ENCODE measurements at regions of chr6 and their contacts with region 1.

Region 1: DNA sequence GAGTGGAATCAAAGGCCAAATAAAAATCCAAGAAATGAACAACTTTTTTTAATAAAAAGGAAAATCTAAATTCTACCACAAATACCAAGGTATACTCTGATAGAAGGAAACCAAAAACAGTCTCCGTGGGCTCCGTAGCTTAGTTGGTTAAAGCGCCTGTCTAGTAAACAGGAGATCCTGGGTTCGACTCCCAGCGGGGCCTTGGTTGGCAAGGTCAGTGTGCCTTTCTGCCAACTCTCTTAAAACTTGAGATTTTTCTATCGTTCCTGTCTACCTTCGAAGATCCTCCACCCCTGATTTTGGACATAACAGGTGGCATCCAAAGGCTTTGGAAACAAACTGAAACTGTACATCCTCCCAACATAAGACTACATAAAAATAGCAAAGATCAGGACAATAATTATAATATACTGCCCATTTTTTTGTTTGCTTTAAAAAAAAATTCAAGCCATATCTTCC is 197.9 kb downstream of the TRIM27 start:
- DNase-seq: no peak
- H3K4me3 Mint-ChIP-seq: no peak overlapping the region
- H3K27ac Mint-ChIP-seq: no peak overlapping the region
- H3K4me1 Mint-ChIP-seq: peaks cover 3% of the 10 kb centered on the region
- H3K27me3 Mint-ChIP-seq: no peaks in the 10 kb centered on the region
- CTCF ChIP-seq: no peak

Region 2: GRCh38 chr6:27545271-27546046 is 1180.5 kb before region 1 on chr6:
- CTCF ChIA-PET with region 1: no interaction called
- POLR2A ChIA-PET with region 1: no interaction called
- intact Hi-C with region 1: no loop called
- DNase-seq: peak; percentile 87
- H3K4me3 Mint-ChIP-seq: peak overlapping the region; percentile 83
- H3K27ac Mint-ChIP-seq: peak overlapping the region; percentile 91
- H3K4me1 Mint-ChIP-seq: peaks cover 22% of the 10 kb centered on the region
- H3K27me3 Mint-ChIP-seq: no peaks in the 10 kb centered on the region
- CTCF ChIP-seq: no peak

Region 3: DNA sequence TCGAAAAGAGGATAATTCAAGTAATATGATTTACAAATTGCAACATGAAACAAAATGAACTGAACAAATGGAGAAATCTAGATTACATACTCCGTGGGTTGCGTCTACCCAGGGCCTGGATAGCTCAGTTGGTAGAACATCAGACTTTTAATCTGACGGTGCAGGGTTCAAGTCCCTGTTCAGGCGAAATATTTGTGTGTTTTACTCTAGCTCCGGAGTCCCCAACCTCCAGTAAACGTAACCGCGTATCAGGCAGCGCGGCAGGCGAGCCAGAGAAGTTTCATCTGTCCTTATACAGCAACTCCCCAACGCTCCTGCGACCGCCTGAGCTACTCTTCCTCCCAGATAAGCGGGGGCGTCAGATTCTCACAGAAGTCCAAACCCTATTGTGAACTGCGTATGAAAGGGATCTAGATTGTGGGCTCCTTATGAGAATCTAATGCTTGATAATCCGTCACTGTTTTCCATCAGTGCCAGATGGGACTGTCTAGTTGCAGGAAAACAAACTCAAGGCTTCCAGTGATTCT is 21.8 kb after region 1 on chr6:
- CTCF ChIA-PET with region 1: interaction called, 5 read pairs
- POLR2A ChIA-PET with region 1: interaction called, 13 read pairs
- intact Hi-C with region 1: no loop called
- DNase-seq: peak; percentile 86
- H3K4me3 Mint-ChIP-seq: peak overlapping the region; percentile 76
- H3K27ac Mint-ChIP-seq: peak overlapping the region; percentile 81
- H3K4me1 Mint-ChIP-seq: no peaks in the 10 kb centered on the region
- H3K27me3 Mint-ChIP-seq: no peaks in the 10 kb centered on the region
- CTCF ChIP-seq: no peak

Region 4: DNA sequence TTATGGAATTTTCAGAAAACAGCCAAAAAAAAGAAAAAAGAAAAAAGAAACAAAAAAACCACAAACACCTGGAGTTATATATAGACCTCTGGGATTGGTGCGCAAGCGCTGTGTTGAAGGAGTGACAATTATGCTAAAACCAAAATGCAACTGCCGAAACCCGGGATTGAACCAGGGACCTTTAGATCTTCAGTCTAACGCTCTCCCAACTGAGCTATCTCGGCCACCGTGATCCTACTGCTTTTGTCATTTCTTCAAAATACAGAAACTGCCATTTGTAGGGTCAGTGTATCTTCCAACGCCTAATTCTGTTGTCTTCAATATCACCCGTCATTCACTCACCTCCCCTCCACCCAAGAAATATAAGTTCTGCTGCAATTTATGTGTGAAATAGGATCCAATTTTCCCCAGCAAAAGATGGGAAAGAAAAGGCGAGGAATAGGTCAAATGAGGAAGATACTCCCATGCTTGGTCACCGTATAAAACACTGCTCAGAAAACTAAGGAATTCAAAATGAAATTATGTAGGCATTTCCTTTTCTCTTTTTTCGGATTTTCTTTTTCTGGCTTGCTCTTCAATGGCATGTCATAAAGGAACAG is 81.9 kb after region 1 on chr6:
- CTCF ChIA-PET with region 1: interaction called, 3 read pairs
- POLR2A ChIA-PET with region 1: interaction called, 5 read pairs
- intact Hi-C with region 1: loop called (anchors 5 kb)
- DNase-seq: peak; percentile 76
- H3K4me3 Mint-ChIP-seq: peak overlapping the region; percentile 41
- H3K27ac Mint-ChIP-seq: no peak overlapping the region
- H3K4me1 Mint-ChIP-seq: peaks cover 23% of the 10 kb centered on the region
- H3K27me3 Mint-ChIP-seq: no peaks in the 10 kb centered on the region
- CTCF ChIP-seq: no peak

Region 5: DNA sequence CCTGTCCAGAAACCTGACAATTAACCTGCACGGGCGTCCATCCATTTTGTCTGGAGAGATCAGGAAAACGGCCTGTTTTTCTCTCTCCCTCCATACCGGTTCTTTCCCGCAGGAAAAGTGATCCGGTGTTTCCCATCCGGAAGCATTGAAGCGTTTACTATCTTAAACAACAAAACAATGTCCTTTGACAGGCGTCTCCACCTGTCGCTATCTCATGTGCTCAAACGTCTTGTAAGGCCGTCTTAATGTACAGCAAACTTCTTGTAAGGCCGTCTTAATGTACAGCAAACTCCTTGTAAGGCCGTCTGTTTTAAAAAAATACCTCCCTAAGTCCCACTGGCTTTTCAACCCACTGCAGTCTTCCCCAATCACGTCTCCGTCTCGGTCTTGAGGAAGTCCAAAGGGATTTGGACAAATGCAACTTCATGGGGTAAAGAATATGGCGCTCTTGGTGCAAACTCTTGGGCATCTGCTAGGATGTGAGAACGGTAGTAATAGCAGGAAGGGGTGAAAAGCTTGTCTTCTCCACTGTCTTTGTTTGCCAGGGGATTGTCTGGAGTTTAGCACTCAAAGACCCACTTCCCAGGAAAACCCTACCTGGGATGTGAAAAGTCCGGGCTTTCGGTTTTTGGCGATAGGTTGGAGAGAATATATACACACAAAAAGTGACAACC is 227.8 kb after region 1 on chr6:
- CTCF ChIA-PET with region 1: no interaction called
- POLR2A ChIA-PET with region 1: no interaction called
- intact Hi-C with region 1: no loop called
- DNase-seq: peak; percentile 22
- H3K4me3 Mint-ChIP-seq: peak overlapping the region; percentile 77
- H3K27ac Mint-ChIP-seq: peak overlapping the region; percentile 51
- H3K4me1 Mint-ChIP-seq: peaks cover 7% of the 10 kb centered on the region
- H3K27me3 Mint-ChIP-seq: no peaks in the 10 kb centered on the region
- CTCF ChIP-seq: no peak

Region 6: DNA sequence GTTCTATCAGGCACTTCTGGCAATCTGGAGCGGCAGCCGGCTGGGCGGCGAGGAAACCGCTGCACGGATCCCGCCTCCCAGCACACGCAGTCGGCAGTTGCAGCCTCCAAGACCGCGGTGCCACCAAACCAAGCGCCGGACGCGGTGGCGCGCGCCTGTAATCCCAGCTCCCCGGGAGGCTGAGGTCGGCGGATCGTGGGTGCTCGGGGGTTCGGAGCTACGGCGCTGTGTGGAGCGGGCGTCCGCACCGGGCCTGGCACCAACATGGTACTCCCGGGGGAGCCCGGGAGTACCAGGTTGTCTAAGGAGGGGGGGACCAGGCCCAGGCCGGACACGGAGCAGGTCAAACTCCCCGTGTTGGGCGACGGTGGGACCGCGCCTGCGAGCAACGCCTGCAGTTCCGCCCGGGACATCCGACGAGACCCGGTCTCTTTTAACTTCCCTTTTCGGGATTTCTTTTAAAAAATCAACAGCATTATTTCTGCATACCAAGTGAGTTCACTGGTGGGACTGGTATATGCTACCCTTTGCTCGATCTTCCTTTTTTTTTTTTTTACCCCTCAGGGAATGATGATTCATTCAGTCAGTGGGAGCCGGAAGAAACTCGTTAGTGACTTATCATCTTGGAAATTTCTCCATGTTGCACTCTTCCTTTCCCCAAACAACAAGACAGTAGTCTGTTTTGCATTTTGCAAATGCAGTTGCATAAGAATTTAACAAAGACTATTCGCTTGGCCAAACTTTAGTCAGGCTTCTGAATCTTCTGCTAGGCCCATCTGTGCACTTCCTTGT is 251.6 kb after region 1 on chr6:
- CTCF ChIA-PET with region 1: no interaction called
- POLR2A ChIA-PET with region 1: no interaction called
- intact Hi-C with region 1: no loop called
- DNase-seq: peak; percentile 83
- H3K4me3 Mint-ChIP-seq: peak overlapping the region; percentile 71
- H3K27ac Mint-ChIP-seq: peak overlapping the region; percentile 68
- H3K4me1 Mint-ChIP-seq: peaks cover 28% of the 10 kb centered on the region
- H3K27me3 Mint-ChIP-seq: no peaks in the 10 kb centered on the region
- CTCF ChIP-seq: no peak